ENCODE measurements at regions of chr13 and their contacts with region 1.

Region 1: DNA sequence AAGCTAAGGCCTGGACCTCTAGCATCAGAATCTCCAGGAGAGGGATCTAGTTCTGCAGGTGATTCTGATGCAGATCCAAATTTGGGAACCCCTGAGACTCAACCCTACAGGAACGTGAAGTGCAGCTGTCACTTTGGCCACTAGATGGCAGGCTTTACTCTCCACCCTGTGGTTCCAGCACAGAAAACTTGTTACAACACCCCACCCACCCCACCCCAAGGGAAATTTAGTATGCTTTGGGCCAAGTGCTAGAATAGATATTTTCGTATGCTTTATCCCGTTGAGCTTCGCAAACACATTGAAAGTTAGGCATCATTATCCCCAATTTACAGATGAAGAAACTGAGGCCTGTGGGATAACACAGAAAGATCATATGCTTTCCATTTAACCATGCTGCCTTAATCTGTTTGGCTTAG is 232.0 kb downstream of the B3GLCT start:
- DNase-seq: peak; percentile 48 to 62
- ATAC-seq: peak in 2 of 4 donors; percentile 50 to 61
- H3K4me3 ChIP-seq: no peak overlapping the region
- H3K27ac ChIP-seq: no peak overlapping the region
- H3K4me1 ChIP-seq: no peaks in the 10 kb centered on the region
- H3K27me3 ChIP-seq: peaks cover 0 to 2% (median 0%) of the 10 kb centered on the region in 3 donors
- CTCF ChIP-seq: peak; percentile 78

Region 2: GRCh38 chr13:31742097-31742734 is 310.5 kb after region 1 on chr13:
- intact Hi-C with region 1: loop called (anchors 2 to 5 kb)
- DNase-seq: peak; percentile 34 to 73
- ATAC-seq: peak; percentile 59 to 88 (median 70)
- H3K4me3 ChIP-seq: peak overlapping the region; percentile 13
- H3K27ac ChIP-seq: no peak overlapping the region
- H3K4me1 ChIP-seq: no peaks in the 10 kb centered on the region
- H3K27me3 ChIP-seq: no peaks in the 10 kb centered on the region
- CTCF ChIP-seq: peak; percentile 98

Measured in psoas muscle (tissue), 8 donors.